Dorsolateral prefrontal cortex (tissue), 120 donors: ENCODE measurements at regions of chr15 and their contacts with region 1.

Region 1: DNA sequence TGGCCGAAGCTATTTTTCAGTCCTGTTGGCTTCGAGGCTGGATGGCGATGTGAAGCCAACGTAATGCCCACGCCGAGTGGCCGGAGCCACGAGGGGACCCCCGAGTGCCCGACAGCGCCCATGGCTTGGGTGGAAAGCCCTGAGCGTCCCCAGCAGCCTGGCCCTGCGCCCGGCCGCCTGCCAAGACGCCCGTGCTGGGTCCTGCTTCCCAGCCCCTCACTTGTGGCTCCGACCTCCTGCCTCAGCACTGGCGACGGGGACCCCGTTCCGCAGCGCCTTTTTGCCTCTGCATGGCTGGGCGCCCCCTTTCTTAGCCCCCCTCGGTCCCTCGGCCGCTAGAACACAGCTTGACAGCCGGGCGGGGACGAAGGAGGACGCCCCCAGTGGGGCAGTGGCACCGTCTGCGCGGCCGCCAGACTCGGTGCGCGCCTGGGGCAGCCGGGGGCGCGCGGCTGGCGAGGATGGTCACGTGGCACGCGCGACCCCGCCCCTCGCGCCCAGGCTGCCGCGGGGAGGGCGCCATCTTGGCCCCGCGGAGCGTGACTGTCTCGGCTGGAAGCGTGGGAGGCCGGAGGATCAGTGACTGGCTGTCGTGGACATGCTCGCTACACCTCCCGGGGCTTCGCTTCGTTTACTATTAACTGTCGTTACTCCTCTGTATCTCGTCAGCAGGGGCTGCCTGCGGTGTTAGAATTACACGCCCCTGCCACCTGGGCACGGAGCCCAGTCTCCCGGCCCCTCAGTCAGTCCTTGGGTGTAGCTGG is 626 bp upstream of the GPR176 start:
- DNase-seq: peak; percentile 64 to 90 (median 77)
- H3K4me3 ChIP-seq: peak overlapping the region; percentile 46 to 92 (median 82)
- H3K27ac ChIP-seq: peak overlapping the region; percentile 48 to 95 (median 84)
- H3K27me3 ChIP-seq: no peaks in the 10 kb centered on the region
- CTCF ChIP-seq: peak in 38 of 56 donors; percentile 7 to 55 (median 28)

Region 2: GRCh38 chr15:39782441-39783138 is 138.1 kb before region 1 on chr15 and contains the start of gene FSIP1:
- intact Hi-C with region 1: loop called (anchors 5 kb)
- DNase-seq: peak; percentile 92 to 97 (median 94)
- H3K4me3 ChIP-seq: peak within 1 kb of the TSS; percentile 59 to 95 (median 81)
- H3K27ac ChIP-seq: peak within 1 kb of the TSS; percentile 3 to 94 (median 85)
- H3K27me3 ChIP-seq: no peaks in the 10 kb centered on the region
- CTCF ChIP-seq: peak in 23 of 56 donors; percentile 1 to 50 (median 16)
- total RNA-seq, gene FSIP1: 3.4 to 15.4 (median 8.8) TPM

Region 3: DNA sequence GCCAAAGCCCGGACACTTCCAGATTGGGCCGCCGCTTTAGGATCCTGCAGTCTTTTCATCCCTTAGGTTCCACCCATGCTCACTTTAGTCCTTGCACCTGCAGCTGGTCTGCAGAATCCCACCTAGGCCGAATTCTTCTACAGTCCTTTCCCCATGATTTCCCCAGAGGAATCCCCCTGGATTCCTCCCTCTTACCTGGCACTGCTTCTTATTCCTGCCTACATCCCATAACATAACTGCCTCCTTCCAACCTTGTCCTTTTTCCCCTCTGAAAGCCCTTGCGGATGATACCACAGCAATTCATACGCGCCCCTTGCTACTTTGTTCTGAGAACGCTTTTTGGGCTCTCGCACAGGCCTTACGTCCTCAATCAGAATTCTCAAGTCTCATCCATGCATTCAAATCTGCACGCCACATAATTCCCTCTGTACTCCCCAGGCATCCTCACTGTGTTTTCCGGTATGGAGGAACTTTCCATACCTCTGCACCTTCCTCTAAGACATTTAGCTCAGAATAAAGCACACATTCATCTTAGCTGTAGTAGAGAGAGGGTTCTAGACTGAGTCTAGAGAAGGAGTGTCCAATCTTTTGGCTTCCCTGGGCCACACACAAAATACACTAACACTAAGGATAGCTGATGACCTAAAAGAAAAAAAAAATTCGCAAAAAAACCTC is 13.8 kb after region 1 on chr15:
- intact Hi-C with region 1: loop called in 1 of 2 experiments (anchors 1 kb)
- DNase-seq: peak in 1 of 10 donors; percentile 61
- H3K4me3 ChIP-seq: peak overlapping the region; percentile 48 to 94 (median 84)
- H3K27ac ChIP-seq: peak overlapping the region in 58 of 59 donors; percentile 29 to 94 (median 84)
- H3K27me3 ChIP-seq: no peaks in the 10 kb centered on the region
- CTCF ChIP-seq: no peak